ENCODE measurements at regions of chr5 and their contacts with region 1.

Region 1: GRCh38 chr5:90529194-90529938 is at the start of gene LYSMD3:
- DNase-seq: peak; percentile 89
- ATAC-seq: peak; percentile 95
- H3K4me3 ChIP-seq: peak within 1 kb of the TSS; percentile 76
- H3K27ac ChIP-seq: peak within 1 kb of the TSS; percentile 86
- H3K4me1 ChIP-seq: no peaks in the 10 kb centered on the region
- H3K27me3 ChIP-seq: no peaks in the 10 kb centered on the region
- CTCF ChIP-seq: no peak
- EP300 ChIP-seq: peak in 1 of 2 experiments; percentile 20; a peak in 1 of 4 replicates
- POLR2A ChIP-seq: peak; percentile 97
- RAD21 ChIP-seq: no peak
- polyA plus RNA-seq, gene LYSMD3: 3.9 to 6.0 TPM

Region 2: GRCh38 chr5:90184764-90185163 is 344.6 kb before region 1 on chr5:
- CTCF ChIA-PET with region 1: no interaction called
- POLR2A ChIA-PET with region 1: no interaction called
- RAD21 ChIA-PET with region 1: no interaction called
- SMC1A ChIA-PET with region 1: no interaction called
- in situ Hi-C with region 1: no loop called
- intact Hi-C with region 1: no loop called
- DNase-seq: no peak
- ATAC-seq: no peak
- H3K4me3 ChIP-seq: no peak overlapping the region
- H3K27ac ChIP-seq: no peak overlapping the region
- H3K4me1 ChIP-seq: no peaks in the 10 kb centered on the region
- H3K27me3 ChIP-seq: no peaks in the 10 kb centered on the region
- CTCF ChIP-seq: no peak
- EP300 ChIP-seq: no peak
- POLR2A ChIP-seq: no peak
- RAD21 ChIP-seq: no peak

Region 3: GRCh38 chr5:90409318-90410177 is 119.8 kb before region 1 on chr5 and contains the start of gene CETN3:
- CTCF ChIA-PET with region 1: interaction called, 4 read pairs
- POLR2A ChIA-PET with region 1: interaction called, 19 read pairs
- RAD21 ChIA-PET with region 1: interaction called, 27 read pairs
- SMC1A ChIA-PET with region 1: interaction called, 6 read pairs
- in situ Hi-C with region 1: no loop called
- intact Hi-C with region 1: loop called (anchors 1 kb)
- DNase-seq: peak; percentile 88
- ATAC-seq: peak; percentile 94
- H3K4me3 ChIP-seq: peak within 1 kb of the TSS; percentile 89
- H3K27ac ChIP-seq: peak within 1 kb of the TSS; percentile 97
- H3K4me1 ChIP-seq: no peaks in the 10 kb centered on the region
- H3K27me3 ChIP-seq: no peaks in the 10 kb centered on the region
- CTCF ChIP-seq: no peak
- EP300 ChIP-seq: peak in 1 of 2 experiments; percentile 44; a peak in 1 of 4 replicates
- POLR2A ChIP-seq: peak; percentile 93
- RAD21 ChIP-seq: no peak
- polyA plus RNA-seq, gene CETN3: 54.6 to 59.1 TPM

Region 4: GRCh38 chr5:90434116-90434714 is 95.2 kb before region 1 on chr5:
- CTCF ChIA-PET with region 1: interaction called, 118 read pairs
- POLR2A ChIA-PET with region 1: interaction called, 5 read pairs
- RAD21 ChIA-PET with region 1: interaction called, 43 read pairs
- SMC1A ChIA-PET with region 1: interaction called, 46 read pairs
- in situ Hi-C with region 1: loop called (anchors 10 kb)
- intact Hi-C with region 1: loop called (anchors 1 kb)
- DNase-seq: no peak
- ATAC-seq: peak; percentile 92
- H3K4me3 ChIP-seq: no peak overlapping the region
- H3K27ac ChIP-seq: no peak overlapping the region
- H3K4me1 ChIP-seq: 0 out of 2 replicates have a peak, but pooled peaks cover 5% of the 10 kb centered on the region
- H3K27me3 ChIP-seq: no peaks in the 10 kb centered on the region
- CTCF ChIP-seq: peak; percentile 65 to 75 (median 68)
- EP300 ChIP-seq: no peak
- POLR2A ChIP-seq: no peak
- RAD21 ChIP-seq: peak; percentile 72

Region 5: GRCh38 chr5:90606539-90606938 is 77.2 kb after region 1 on chr5:
- CTCF ChIA-PET with region 1: interaction called, 10 read pairs
- POLR2A ChIA-PET with region 1: no interaction called
- RAD21 ChIA-PET with region 1: interaction called, 6 read pairs
- SMC1A ChIA-PET with region 1: interaction called, 4 read pairs
- in situ Hi-C with region 1: no loop called
- intact Hi-C with region 1: loop called (anchors 5 kb)
- DNase-seq: no peak
- ATAC-seq: peak; percentile 48; the same call in 2 of the 3 replicates
- H3K4me3 ChIP-seq: no peak overlapping the region
- H3K27ac ChIP-seq: no peak overlapping the region
- H3K4me1 ChIP-seq: peaks cover 3% of the 10 kb centered on the region; the same call in 1 of the 2 replicates
- H3K27me3 ChIP-seq: no peaks in the 10 kb centered on the region; a peak in 1 of 4 replicates
- CTCF ChIP-seq: peak; percentile 31 to 41 (median 41); a peak in 4 of 6 replicates
- EP300 ChIP-seq: no peak
- POLR2A ChIP-seq: no peak
- RAD21 ChIP-seq: peak; percentile 44